Activated T-helper 2 cell treated with anti-CD3 and anti-CD28 coated beads, Interferon-gamma antibody, Interleukin-2, Interleukin-4, amounts not matched to agents 10 μg/mL and 5 μg/mL and 100 μg/mL, durations not matched to agents 14 hours and 24 hours and 36 hours (primary cell): ENCODE measurements at regions of chr3 and their contacts with region 1.

Region 1: DNA sequence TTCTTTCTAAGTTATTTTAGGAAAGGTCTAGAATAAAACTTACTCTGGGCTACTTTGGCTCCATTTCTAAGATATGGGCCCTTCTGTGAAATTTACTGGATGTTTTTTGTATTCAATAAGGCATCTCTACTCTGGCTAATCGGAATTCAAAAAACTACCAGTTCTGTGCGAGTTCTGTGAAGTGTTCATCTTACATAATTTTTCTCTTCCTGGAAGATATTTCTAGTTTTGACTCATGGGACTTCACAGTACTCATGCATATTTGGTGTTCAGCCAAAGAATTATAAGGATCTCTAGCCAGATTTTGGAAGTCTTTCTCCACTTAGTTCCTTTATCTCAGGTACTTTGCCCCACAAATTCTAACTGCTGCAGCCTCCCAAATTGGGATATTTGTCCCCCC is 46.4 kb upstream of the MBNL1 start:
- DNase-seq: no peak
- H3K4me3 Mint-ChIP-seq: peak overlapping the region; percentile 23
- H3K27ac Mint-ChIP-seq: peak overlapping the region; percentile 36
- H3K4me1 Mint-ChIP-seq: peaks cover 59% of the 10 kb centered on the region
- H3K27me3 Mint-ChIP-seq: no peaks in the 10 kb centered on the region

Region 2: DNA sequence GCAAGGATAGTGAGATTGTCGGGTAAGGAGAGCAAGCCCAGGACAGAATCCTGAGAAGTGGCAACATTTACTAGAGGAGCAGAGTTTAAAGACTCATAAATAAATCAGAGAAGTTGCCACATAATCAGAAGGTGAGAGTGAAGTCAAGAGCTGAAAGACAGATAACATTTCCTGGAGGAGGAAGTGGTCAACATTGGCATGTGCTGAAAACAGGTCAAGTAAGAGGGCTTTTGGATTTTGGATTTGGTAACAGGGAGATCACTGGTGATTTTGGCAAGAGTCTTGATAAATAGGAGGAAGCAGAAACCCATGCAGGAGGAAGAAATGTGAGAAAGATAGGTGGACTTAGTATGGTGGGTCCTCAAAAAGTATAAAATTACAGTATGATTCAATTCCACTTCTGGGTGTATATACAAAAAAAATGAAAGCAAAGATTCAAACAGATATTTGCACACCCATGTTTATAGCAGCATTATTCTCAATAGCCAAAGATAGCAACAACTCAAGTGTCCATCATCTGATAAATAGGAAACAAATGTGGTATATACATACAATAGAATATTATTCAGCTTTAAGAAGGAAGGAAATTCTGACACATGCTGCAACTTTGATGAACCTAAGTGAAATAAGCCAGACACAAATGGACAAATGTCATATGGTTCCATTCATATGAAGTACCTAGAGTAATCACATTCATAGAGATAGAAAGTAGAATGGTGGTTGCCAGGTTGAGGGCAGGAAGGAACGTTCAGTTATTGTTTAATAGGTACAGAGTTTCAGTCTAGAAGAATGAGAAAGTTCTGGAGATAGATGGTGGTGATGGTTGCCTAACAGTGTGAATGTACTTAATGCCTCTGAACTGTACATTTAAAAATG is 19.1 kb after region 1 on chr3:
- intact Hi-C with region 1: loop called (anchors 1 kb)
- DNase-seq: no peak
- H3K4me3 Mint-ChIP-seq: peak overlapping the region; percentile 66
- H3K27ac Mint-ChIP-seq: peak overlapping the region; percentile 77
- H3K4me1 Mint-ChIP-seq: peaks cover 54% of the 10 kb centered on the region
- H3K27me3 Mint-ChIP-seq: no peaks in the 10 kb centered on the region

Region 3: DNA sequence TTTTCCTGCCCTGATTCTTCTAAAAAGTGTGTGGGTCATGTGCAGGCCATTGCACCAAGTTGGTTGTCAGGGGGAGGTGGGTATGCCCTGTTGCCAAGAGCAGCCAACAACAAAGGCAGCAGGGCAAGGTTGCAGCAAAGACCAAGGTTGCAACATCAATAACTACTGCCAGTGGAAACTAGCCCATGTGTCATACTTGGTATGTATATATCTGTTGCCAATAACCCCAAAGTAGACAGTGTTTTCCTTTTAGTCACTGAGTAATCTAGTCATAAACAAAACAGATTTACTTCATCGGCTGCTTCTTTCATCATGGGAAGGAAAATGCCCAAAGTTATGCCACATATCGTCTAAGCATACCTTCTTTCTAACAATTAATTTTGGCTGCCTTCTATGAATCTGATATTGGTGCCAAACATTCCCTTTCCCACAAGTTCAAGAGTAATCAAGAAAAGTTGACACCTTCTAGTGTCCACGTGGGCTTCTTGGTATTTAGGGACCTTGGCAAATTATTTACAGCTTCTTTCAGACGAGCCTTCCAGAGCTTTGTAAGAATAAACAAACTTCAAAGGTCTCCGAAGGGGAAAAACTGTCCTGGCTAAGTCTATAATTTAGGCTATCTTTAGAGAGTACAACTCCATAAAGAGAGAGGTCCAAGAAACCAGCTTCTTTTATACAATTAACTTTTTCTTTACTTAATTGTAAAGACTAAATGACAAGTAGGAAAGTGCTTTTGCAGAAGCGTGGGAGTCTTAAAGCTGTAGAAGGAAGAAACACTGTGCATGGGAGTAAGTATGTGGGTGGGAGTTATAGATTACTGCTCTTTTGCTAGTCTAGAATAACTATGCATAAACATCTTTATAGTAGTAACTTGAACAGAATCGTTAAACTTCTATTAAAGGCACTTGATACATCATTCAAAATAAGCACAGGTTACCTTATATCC is 36.4 kb after region 1 on chr3:
- intact Hi-C with region 1: no loop called
- DNase-seq: peak; percentile 49
- H3K4me3 Mint-ChIP-seq: peak overlapping the region; percentile 74
- H3K27ac Mint-ChIP-seq: peak overlapping the region; percentile 97
- H3K4me1 Mint-ChIP-seq: peaks cover 78% of the 10 kb centered on the region
- H3K27me3 Mint-ChIP-seq: no peaks in the 10 kb centered on the region

Region 4: GRCh38 chr3:152405915-152406802 is 183.8 kb after region 1 on chr3:
- intact Hi-C with region 1: no loop called
- DNase-seq: no peak
- H3K4me3 Mint-ChIP-seq: no peak overlapping the region
- H3K27ac Mint-ChIP-seq: peak overlapping the region; percentile 5
- H3K4me1 Mint-ChIP-seq: peaks cover 42% of the 10 kb centered on the region
- H3K27me3 Mint-ChIP-seq: no peaks in the 10 kb centered on the region